Activated CD4-positive, alpha-beta T cell treated with anti-CD3 and anti-CD28 coated beads for 36 hours (primary cell): ENCODE measurements at regions of chr4 and their contacts with region 1.

Region 1: DNA sequence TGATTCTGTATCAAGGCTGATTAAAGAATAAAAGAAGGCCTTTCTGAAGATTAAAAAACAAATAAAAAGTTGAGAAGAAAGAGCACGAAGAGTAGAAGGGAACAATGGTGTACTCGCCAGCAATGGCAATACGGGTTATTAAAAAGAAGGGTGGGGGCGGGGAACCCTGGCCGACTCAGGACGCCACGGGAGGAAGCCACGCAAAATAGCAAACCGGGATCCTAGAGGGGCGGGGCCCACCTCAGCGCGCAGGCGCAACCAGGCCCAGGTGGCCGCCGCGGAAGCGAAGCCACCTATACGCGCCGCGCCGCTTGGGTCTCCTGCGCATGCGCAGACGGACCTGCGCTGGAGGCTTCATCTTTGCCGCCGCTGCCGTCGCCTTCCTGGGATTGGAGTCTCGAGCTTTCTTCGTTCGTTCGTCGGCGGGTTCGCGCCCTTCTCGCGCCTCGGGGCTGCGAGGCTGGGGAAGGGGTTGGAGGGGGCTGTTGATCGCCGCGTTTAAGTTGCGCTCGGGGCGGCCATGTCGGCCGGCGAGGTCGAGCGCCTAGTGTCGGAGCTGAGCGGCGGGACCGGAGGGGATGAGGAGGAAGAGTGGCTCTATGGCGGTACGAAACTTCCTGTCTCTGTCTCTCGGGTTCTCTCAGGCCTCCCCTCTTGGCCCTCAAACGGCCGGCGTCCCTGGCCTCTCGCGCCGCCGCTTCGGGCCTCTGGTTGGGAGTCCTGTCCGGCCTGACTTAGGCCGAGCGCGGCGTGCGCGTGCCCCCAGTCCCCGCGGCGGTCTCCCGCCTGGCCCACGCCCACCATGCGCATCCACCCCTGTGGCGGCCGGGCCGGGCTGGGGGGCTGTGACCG is at the start of gene FIP1L1:
- DNase-seq: peak; percentile 98
- ATAC-seq: peak; percentile 97
- H3K4me3 Mint-ChIP-seq: peak within 1 kb of the TSS; percentile 99
- H3K27ac Mint-ChIP-seq: peak within 1 kb of the TSS; percentile 97
- H3K4me1 Mint-ChIP-seq: peaks cover 29% of the 10 kb centered on the region
- H3K27me3 Mint-ChIP-seq: no peaks in the 10 kb centered on the region
- total RNA-seq, gene FIP1L1: 72.3 to 96.3 TPM

Region 2: GRCh38 chr4:53365486-53366300 is 11.9 kb before region 1 on chr4 and contains the start of gene SCFD2:
- CTCF ChIA-PET with region 1: interaction called, 5 read pairs
- POLR2A ChIA-PET with region 1: interaction called, 3 read pairs
- intact Hi-C with region 1: loop called (anchors 1 kb)
- DNase-seq: peak; percentile 98
- ATAC-seq: peak; percentile 98
- H3K4me3 Mint-ChIP-seq: peak within 1 kb of the TSS; percentile 95
- H3K27ac Mint-ChIP-seq: peak within 1 kb of the TSS; percentile 95
- H3K4me1 Mint-ChIP-seq: peaks cover 47% of the 10 kb centered on the region
- H3K27me3 Mint-ChIP-seq: peaks cover 5% of the 10 kb centered on the region
- total RNA-seq, gene SCFD2: 21.6 to 22.5 TPM

Region 3: DNA sequence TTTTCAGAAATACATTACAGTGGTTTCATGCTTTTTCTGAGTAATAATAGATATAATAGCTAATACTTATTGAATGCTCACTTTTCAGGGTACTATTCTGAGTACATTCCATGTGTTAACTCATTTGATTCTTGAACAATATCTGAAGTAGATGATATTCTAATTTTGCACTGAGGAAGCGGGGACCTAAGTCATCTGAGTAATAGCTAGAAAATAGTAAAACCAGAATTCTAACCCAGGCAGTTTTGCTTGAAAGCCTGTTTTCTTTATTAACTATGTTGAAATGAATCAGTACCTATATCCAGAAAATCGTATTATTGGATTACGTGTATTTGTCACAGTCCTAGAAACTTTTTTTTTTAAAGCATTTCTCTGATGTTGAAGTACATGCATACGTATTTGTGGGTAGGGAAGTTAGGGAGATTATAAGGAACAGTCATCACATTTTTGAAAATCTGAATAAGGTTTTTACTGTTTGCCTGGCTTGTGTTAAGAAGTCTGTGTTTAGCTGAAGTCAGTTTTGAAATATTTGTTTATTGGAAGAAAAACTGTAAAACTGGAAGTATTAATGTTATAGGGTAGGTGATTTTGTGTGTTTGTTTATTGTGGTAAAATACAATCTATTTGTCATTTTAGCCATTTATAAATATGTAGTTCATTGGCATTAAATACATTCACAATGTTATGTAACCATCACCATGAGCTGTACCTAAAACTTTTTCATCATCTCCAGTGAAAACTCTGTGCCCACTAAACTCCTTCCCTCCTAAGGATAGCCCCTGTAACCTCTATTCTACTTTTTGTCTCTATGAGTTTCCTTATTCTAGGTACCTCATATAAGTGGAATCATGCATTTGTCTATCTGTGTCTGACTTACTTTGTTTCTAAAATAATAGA is 55.2 kb after region 1 on chr4:
- CTCF ChIA-PET with region 1: no interaction called
- POLR2A ChIA-PET with region 1: no interaction called
- intact Hi-C with region 1: loop called in 1 of 2 experiments (anchors 5 kb)
- DNase-seq: no peak
- ATAC-seq: peak; percentile 81
- H3K4me3 Mint-ChIP-seq: no peak overlapping the region
- H3K27ac Mint-ChIP-seq: no peak overlapping the region
- H3K4me1 Mint-ChIP-seq: peaks cover 26% of the 10 kb centered on the region
- H3K27me3 Mint-ChIP-seq: no peaks in the 10 kb centered on the region

Region 4: DNA sequence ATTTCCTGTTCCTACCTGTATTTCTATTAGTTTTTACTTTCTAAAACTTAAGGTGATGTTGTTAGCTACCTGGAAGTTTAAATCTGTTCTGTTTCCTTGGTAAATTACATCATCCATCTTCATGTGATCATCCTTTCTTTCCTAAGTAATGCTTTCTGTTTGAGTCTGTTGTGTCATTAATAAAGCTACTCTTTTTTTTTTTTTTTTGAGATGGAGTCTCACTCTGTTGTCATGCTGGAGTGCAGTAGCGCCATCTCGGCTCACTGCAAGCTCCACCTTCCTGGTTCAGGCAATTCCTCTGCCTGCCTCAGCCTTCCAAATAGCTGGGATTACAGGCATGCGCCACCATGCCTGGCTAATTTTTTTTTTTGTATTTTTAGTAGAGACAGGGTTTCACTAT is 73.2 kb after region 1 on chr4:
- CTCF ChIA-PET with region 1: no interaction called
- POLR2A ChIA-PET with region 1: no interaction called
- intact Hi-C with region 1: no loop called
- DNase-seq: no peak
- ATAC-seq: no peak
- H3K4me3 Mint-ChIP-seq: no peak overlapping the region
- H3K27ac Mint-ChIP-seq: peak overlapping the region; percentile 60
- H3K4me1 Mint-ChIP-seq: peaks cover 7% of the 10 kb centered on the region
- H3K27me3 Mint-ChIP-seq: no peaks in the 10 kb centered on the region